Dorsolateral prefrontal cortex (tissue), 120 donors: ENCODE measurements at regions of chr15 and their contacts with region 1.

Region 1: GRCh38 chr15:31136016-31136415 is 34.5 kb upstream of the TRPM1 start:
- DNase-seq: no peak
- H3K4me3 ChIP-seq: no peak overlapping the region
- H3K27ac ChIP-seq: no peak overlapping the region
- H3K27me3 ChIP-seq: peaks cover 0 to 5% (median 0%) of the 10 kb centered on the region in 45 donors
- CTCF ChIP-seq: no peak

Region 2: DNA sequence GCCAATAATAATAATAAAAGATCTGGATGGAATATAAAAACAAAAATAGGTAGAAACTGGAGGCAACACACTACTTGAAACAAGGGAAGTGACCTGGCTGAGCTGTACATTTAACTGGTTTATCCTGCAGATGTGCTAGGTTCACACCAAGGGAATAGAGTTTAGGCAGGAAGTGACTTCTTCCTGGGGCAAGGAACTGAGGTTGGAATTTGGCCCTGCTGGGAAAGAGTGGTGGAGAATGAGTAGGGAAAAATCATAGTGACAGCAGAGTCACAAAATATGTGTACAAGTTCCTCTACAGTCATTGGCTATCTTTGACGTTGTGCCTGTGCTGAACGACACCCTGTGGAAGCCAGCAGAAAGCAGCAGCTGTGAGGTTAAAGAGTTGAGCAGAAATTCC is 466.0 kb before region 1 on chr15:
- intact Hi-C with region 1: loop called in 1 of 2 experiments (anchors 10 kb)
- DNase-seq: no peak
- H3K4me3 ChIP-seq: no peak overlapping the region
- H3K27ac ChIP-seq: no peak overlapping the region
- H3K27me3 ChIP-seq: peaks cover 0 to 3% (median 0%) of the 10 kb centered on the region in 45 donors
- CTCF ChIP-seq: no peak

Region 3: GRCh38 chr15:30791239-30792175 is 344.5 kb before region 1 on chr15:
- intact Hi-C with region 1: loop called in 1 of 2 experiments (anchors 10 kb)
- DNase-seq: no peak
- H3K4me3 ChIP-seq: no peak overlapping the region
- H3K27ac ChIP-seq: no peak overlapping the region
- H3K27me3 ChIP-seq: peaks cover 0 to 9% (median 0%) of the 10 kb centered on the region in 45 donors
- CTCF ChIP-seq: no peak

Region 4: DNA sequence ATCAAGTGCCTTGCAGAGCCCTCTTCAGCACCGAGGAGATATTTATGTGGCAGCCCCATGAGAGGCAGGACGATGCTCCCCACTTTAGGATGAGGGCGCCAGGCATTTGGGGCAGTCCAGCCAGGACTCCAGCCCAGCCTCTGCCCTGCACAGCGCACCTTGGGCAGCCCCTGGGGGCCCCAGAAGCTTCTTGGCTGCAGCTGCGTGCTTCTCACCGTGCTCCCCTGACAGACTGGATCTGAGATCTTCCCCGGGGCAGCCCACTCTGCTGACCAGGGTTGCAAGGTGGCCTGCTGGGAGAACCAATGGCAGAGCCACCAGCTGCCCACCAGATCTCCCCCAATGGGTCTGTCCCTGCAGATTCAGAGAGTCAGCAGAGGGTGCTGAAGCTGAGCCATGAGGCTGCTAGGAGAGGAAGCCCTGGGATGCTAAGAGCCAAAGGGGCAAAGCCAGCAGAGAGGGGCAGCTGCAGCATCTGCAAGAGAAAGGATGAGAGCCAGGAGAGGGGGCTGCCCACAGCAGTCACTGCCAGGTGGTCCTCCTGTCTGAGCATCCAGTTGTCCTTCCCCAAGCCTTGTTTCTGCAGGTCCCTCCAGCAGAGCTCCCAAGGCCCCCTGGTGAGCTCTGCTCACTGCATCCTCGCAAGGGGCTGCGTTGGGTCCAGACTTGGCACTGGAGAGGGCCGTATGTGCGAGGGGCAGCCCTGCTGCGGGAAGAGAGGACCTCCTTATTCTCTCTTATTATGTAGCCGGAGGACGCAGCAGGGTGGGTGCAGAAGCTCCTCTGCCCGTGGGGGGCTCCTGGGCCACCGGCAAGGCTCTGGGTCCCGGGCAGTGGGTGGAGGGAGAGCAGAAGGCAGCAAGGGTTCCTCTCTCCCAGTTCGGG is 176.0 kb after region 1 on chr15:
- intact Hi-C with region 1: loop called in 1 of 2 experiments (anchors 10 kb)
- DNase-seq: peak in 1 of 10 donors; percentile 37
- H3K4me3 ChIP-seq: no peak overlapping the region
- H3K27ac ChIP-seq: peak overlapping the region in 11 of 59 donors; percentile 8 to 56 (median 35)
- H3K27me3 ChIP-seq: no peaks in the 10 kb centered on the region
- CTCF ChIP-seq: no peak